ENCODE measurements at regions of chr6 and their contacts with region 1.

Region 1: DNA sequence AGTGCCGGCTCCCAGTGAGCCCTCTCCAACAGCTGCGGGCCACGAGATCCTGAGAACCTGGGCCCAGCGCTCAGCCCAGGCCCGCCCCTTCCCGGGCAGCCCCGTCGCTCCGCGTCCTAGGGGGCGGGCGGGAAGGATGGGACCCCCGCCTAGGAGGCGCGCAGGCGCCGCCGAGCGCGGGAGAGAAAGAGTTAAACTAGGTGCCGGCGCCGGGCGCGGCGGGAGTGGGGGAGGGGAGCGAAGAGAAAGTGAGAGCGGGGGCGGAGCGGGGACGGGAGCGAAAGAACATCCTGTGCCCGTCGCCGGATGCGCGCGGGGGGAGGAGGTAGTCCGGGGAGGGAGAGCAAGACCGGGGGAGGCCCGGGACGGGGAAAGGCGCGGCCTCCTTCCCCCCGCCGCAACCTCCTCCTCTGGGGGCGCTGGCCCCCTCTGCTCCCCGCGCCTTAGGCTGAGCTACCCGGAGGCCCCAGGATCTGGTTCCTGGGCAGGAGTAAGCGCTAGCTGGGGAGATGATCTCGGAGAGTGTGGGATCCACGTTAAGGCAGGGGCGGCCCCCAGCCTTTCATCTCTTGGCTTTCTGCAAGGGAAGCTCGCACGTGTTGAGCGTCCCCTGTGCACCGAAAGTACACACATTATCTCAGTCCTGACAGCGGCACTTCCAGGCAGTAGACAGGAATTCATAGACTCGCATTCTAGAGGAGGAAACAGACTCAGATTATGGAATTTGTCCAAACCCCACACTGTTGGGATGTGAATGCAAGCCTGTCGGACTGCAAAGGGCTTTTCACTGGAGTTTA is 4.9 kb upstream of the ARMC12 start:
- DNase-seq: peak; percentile 98
- H3K4me3 Mint-ChIP-seq: peak overlapping the region; percentile 78
- H3K27ac Mint-ChIP-seq: peak overlapping the region; percentile 87
- H3K4me1 Mint-ChIP-seq: peaks cover 78% of the 10 kb centered on the region
- H3K27me3 Mint-ChIP-seq: no peaks in the 10 kb centered on the region

Region 2: GRCh38 chr6:35342258-35343091 is 389.5 kb before region 1 on chr6 and contains the start of gene PPARD:
- CTCF ChIA-PET with region 1: no interaction called
- intact Hi-C with region 1: loop called (anchors 2 kb)
- DNase-seq: peak; percentile 99
- H3K4me3 Mint-ChIP-seq: peak within 1 kb of the TSS; percentile 97
- H3K27ac Mint-ChIP-seq: peak within 1 kb of the TSS; percentile 89
- H3K4me1 Mint-ChIP-seq: peaks cover 37% of the 10 kb centered on the region
- H3K27me3 Mint-ChIP-seq: no peaks in the 10 kb centered on the region
- total RNA-seq, gene PPARD: 10.8 to 11.2 TPM

Region 3: DNA sequence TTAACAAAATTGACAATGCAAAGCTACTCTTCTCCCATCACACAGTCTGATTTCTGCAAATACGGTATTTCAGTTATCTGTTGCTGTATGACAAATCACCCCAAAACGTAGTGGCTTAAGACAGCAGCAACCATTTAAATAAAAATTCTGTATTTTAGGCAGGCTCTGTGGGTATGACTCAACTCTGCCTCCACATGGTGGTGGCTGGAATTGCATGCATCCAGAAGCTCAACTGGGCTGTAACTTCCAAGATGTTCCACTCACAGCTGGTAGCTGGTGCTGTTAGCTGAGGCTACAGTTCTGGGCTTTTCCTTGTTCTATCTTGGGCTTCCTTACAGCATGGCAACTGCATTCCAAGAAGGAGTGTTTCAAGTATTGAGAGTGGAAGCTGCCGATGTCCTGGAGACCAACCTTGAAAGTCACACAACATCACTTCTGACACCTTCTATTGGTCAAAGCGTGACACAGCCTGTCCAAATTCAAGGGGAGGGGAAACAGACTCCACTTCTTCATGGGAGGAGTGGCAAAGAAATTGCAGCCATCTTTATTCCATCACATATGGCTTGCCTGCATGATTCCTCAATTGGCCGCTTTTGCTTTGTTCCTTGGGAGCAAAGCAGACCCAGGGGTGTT is 179.5 kb before region 1 on chr6:
- CTCF ChIA-PET with region 1: interaction called, 27 read pairs
- intact Hi-C with region 1: no loop called
- DNase-seq: peak; percentile 78
- H3K4me3 Mint-ChIP-seq: no peak overlapping the region
- H3K27ac Mint-ChIP-seq: no peak overlapping the region
- H3K4me1 Mint-ChIP-seq: no peaks in the 10 kb centered on the region
- H3K27me3 Mint-ChIP-seq: no peaks in the 10 kb centered on the region

Region 4: GRCh38 chr6:35583893-35584688 is 147.8 kb before region 1 on chr6:
- CTCF ChIA-PET with region 1: interaction called, 207 read pairs
- intact Hi-C with region 1: loop called (anchors 1 kb)
- DNase-seq: peak; percentile 87
- H3K4me3 Mint-ChIP-seq: no peak overlapping the region
- H3K27ac Mint-ChIP-seq: peak overlapping the region; percentile 37
- H3K4me1 Mint-ChIP-seq: peaks cover 64% of the 10 kb centered on the region
- H3K27me3 Mint-ChIP-seq: no peaks in the 10 kb centered on the region

Region 5: GRCh38 chr6:35624341-35625070 is 107.4 kb before region 1 on chr6:
- CTCF ChIA-PET with region 1: interaction called, 26 read pairs
- intact Hi-C with region 1: no loop called
- DNase-seq: no peak
- H3K4me3 Mint-ChIP-seq: no peak overlapping the region
- H3K27ac Mint-ChIP-seq: peak overlapping the region; percentile 30
- H3K4me1 Mint-ChIP-seq: peaks cover 48% of the 10 kb centered on the region
- H3K27me3 Mint-ChIP-seq: no peaks in the 10 kb centered on the region

Region 6: GRCh38 chr6:35669451-35670045 is 62.4 kb before region 1 on chr6:
- CTCF ChIA-PET with region 1: interaction called, 15 read pairs
- intact Hi-C with region 1: no loop called
- DNase-seq: no peak
- H3K4me3 Mint-ChIP-seq: peak overlapping the region; percentile 56
- H3K27ac Mint-ChIP-seq: peak overlapping the region; percentile 96
- H3K4me1 Mint-ChIP-seq: peaks cover 59% of the 10 kb centered on the region
- H3K27me3 Mint-ChIP-seq: no peaks in the 10 kb centered on the region

Region 7: GRCh38 chr6:35710241-35710847 is 21.6 kb before region 1 on chr6:
- CTCF ChIA-PET with region 1: interaction called, 8 read pairs
- intact Hi-C with region 1: loop called (anchors 1 kb)
- DNase-seq: peak; percentile 79
- H3K4me3 Mint-ChIP-seq: no peak overlapping the region
- H3K27ac Mint-ChIP-seq: peak overlapping the region; percentile 75
- H3K4me1 Mint-ChIP-seq: peaks cover 30% of the 10 kb centered on the region
- H3K27me3 Mint-ChIP-seq: no peaks in the 10 kb centered on the region

Measured in activated naive CD4-positive, alpha-beta T cell treated with anti-CD3 and anti-CD28 coated beads for 36 hours (primary cell).